ENCODE measurements at regions of chr20 and their contacts with region 1.

Region 1: GRCh38 chr20:54188132-54188849 is 14.5 kb upstream of the CYP24A1 start:
- DNase-seq: no peak
- H3K4me3 ChIP-seq: no peak overlapping the region
- H3K27ac ChIP-seq: no peak overlapping the region
- H3K4me1 ChIP-seq: peaks cover 0 to 6% of the 10 kb centered on the region in 2 experiments; a peak in 3 of 4 replicates
- H3K27me3 ChIP-seq: no peaks in the 10 kb centered on the region
- CTCF ChIP-seq: no peak
- EP300 ChIP-seq: no peak
- RAD21 ChIP-seq: no peak

Region 2: DNA sequence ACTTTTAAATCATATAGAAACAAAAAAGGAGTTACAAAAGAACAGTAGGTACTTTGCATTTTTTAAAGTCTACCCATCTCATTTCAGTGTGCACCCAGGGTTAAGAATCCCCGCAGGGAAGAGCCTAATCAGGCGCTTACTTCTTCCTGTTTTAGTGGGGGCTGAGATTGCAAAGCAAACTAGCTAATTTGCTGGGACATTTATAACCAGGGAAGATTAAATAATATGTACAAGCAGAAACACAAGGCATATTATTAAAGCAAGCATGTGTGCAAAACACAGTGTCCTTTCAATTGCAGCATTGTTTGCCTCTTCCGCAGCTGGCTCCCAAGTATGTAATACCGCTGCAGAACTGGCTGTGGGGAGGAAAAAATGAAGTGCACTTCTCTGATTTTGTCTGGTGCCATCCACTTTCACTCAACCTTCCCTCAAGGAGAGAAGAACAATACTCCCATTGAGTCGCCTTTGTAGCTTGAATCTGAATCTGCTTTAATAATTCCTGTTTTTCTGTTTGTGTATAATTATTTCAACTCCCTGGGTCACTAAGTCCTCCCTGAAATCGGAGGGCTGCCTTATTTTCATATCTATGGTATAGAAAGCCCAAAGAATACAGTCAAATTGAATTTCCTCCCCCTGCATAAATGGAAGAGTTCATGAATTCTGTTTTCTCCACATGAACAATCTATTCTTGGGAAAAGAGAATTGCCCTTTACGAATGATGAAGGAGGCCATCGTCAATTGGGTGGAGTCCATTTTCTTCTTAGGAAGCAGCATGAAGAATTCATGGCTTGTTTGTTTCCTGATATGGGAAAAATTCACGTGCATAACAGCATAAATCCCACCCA is 94.6 kb before region 1 on chr20:
- CTCF ChIA-PET with region 1: interaction called, 18 read pairs
- POLR2A ChIA-PET with region 1: no interaction called
- DNase-seq: no peak
- H3K4me3 ChIP-seq: no peak overlapping the region
- H3K27ac ChIP-seq: no peak overlapping the region
- H3K4me1 ChIP-seq: peaks cover 0 to 3% of the 10 kb centered on the region in 2 experiments; a peak in 1 of 4 replicates
- H3K27me3 ChIP-seq: no peaks in the 10 kb centered on the region; the same call in 1 of the 2 replicates
- CTCF ChIP-seq: no peak
- EP300 ChIP-seq: no peak
- RAD21 ChIP-seq: no peak